Activated CD4-positive, alpha-beta T cell treated with anti-CD3 and anti-CD28 coated beads, Interleukin-2, amount 10 ng/mL, durations not matched to agents 24 days and 14 days (primary cell): ENCODE measurements at regions of chr3 and their contacts with region 1.

Region 1: DNA sequence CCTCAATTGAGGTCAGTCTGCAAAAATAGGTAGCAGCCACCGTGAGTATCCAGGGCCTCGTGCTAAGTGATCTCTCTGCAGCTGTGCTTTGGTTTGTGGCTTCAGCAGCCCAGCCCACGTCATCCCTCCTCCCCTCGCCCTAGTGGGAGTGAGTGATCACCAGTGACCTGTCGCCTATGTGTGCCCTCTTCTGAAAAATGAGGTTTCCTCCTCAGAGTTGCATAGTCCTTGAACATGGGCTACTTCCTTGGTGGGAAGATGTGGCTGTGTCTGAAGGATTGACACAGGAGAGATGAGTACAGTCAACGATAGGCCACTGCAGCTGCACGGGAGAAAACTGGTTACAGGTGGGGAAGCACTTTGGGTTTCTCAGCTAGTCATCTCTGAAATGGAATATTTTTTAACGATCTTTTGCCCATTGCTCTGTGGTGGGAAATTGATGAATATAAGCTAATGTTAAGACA is 144.8 kb upstream of the BHLHE40 start:
- DNase-seq: peak; percentile 94
- H3K4me3 Mint-ChIP-seq: peak overlapping the region; percentile 81
- H3K27ac Mint-ChIP-seq: peak overlapping the region; percentile 97
- H3K4me1 Mint-ChIP-seq: peaks cover 83% of the 10 kb centered on the region
- H3K27me3 Mint-ChIP-seq: no peaks in the 10 kb centered on the region

Region 2: GRCh38 chr3:4741404-4742307 is 92.8 kb before region 1 on chr3:
- intact Hi-C with region 1: loop called (anchors 2 kb)
- DNase-seq: peak; percentile 71
- H3K4me3 Mint-ChIP-seq: peak overlapping the region; percentile 47
- H3K27ac Mint-ChIP-seq: peak overlapping the region; percentile 89
- H3K4me1 Mint-ChIP-seq: peaks cover 66% of the 10 kb centered on the region
- H3K27me3 Mint-ChIP-seq: no peaks in the 10 kb centered on the region

Region 3: DNA sequence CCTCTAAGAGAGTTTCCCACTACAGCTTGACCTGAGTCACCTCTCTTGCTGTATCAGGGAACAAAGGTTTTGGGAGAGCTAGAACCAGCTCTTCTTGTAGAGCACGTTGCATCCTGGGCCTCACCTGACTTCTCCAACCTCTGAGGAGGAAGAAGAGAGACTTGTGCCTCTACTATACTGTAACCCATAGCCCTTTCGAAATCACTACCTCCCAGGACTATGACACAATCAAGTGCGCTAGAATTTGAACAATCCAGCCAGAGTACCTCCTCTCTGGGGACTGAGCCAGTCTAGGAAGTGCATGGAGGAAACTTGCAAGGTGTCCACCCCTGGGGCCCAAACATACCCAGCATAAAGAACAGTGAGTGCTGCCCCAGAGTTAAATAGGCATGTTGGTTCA is 48.0 kb before region 1 on chr3:
- intact Hi-C with region 1: no loop called
- DNase-seq: no peak
- H3K4me3 Mint-ChIP-seq: no peak overlapping the region
- H3K27ac Mint-ChIP-seq: no peak overlapping the region
- H3K4me1 Mint-ChIP-seq: peaks cover 4% of the 10 kb centered on the region
- H3K27me3 Mint-ChIP-seq: no peaks in the 10 kb centered on the region

Region 4: GRCh38 chr3:4821975-4822374 is 12.5 kb before region 1 on chr3:
- intact Hi-C with region 1: loop called (anchors 1 kb)
- DNase-seq: peak; percentile 93
- H3K4me3 Mint-ChIP-seq: peak overlapping the region; percentile 75
- H3K27ac Mint-ChIP-seq: peak overlapping the region; percentile 97
- H3K4me1 Mint-ChIP-seq: peaks cover 84% of the 10 kb centered on the region
- H3K27me3 Mint-ChIP-seq: no peaks in the 10 kb centered on the region

Region 5: GRCh38 chr3:4898454-4899313 is 64.2 kb after region 1 on chr3:
- intact Hi-C with region 1: loop called (anchors 2 kb)
- DNase-seq: peak; percentile 72
- H3K4me3 Mint-ChIP-seq: peak overlapping the region; percentile 24
- H3K27ac Mint-ChIP-seq: peak overlapping the region; percentile 91
- H3K4me1 Mint-ChIP-seq: peaks cover 49% of the 10 kb centered on the region
- H3K27me3 Mint-ChIP-seq: no peaks in the 10 kb centered on the region

Region 6: DNA sequence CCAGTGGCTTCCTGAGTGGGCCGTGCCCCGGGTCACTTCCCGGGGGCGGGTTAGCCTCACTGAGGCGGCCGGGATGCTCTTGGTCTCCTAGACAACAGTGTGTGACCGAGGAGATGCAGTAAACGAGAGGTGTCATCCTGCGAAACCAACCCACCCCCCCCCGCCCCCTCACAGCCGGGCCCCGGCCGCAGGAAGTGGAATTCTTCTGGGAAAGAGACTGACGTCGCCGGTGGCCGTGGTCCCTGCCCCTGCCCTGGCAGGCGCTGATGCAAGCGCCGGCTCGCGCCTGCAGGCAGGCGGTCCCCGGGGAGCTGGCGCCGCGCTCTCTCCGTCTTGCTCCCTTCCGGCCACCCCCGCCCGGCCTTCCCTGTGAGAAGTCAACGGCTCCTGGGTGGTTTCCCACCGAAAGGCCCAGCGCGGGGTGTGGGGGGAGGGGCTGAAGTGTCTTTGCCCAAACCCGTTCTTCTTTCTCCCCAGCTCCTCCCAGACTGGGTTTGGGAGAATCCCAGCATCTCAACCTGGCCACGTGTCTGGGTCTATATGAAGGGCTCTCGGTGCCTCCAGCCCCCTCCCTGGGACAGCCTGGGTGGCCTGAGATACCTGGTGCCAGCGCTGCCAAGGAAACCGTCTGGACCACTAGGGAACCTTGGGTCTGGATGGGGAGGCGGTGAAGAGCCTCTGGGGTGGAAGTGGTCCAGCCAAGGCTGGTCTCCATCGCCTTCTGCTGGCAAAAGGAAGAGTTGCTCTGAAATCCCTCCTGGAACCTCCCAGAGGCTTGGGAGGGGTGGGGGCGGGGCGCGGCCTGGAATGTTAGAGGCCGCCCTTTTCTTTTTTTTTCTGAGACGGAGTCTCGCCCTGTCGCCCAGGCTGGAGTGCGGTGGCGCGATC is 192.1 kb after region 1 on chr3:
- intact Hi-C with region 1: loop called (anchors 2 kb)
- DNase-seq: peak; percentile 90
- H3K4me3 Mint-ChIP-seq: peak overlapping the region; percentile 87
- H3K27ac Mint-ChIP-seq: peak overlapping the region; percentile 93
- H3K4me1 Mint-ChIP-seq: peaks cover 49% of the 10 kb centered on the region
- H3K27me3 Mint-ChIP-seq: no peaks in the 10 kb centered on the region

Region 7: GRCh38 chr3:5194341-5195159 is 360.1 kb after region 1 on chr3:
- intact Hi-C with region 1: loop called (anchors 5 kb)
- DNase-seq: peak; percentile 85
- H3K4me3 Mint-ChIP-seq: peak overlapping the region; percentile 79
- H3K27ac Mint-ChIP-seq: peak overlapping the region; percentile 94
- H3K4me1 Mint-ChIP-seq: peaks cover 85% of the 10 kb centered on the region
- H3K27me3 Mint-ChIP-seq: no peaks in the 10 kb centered on the region